CD4-positive, alpha-beta memory T cell (primary cell): ENCODE measurements at regions of chr22 and their contacts with region 1.

Region 1: DNA sequence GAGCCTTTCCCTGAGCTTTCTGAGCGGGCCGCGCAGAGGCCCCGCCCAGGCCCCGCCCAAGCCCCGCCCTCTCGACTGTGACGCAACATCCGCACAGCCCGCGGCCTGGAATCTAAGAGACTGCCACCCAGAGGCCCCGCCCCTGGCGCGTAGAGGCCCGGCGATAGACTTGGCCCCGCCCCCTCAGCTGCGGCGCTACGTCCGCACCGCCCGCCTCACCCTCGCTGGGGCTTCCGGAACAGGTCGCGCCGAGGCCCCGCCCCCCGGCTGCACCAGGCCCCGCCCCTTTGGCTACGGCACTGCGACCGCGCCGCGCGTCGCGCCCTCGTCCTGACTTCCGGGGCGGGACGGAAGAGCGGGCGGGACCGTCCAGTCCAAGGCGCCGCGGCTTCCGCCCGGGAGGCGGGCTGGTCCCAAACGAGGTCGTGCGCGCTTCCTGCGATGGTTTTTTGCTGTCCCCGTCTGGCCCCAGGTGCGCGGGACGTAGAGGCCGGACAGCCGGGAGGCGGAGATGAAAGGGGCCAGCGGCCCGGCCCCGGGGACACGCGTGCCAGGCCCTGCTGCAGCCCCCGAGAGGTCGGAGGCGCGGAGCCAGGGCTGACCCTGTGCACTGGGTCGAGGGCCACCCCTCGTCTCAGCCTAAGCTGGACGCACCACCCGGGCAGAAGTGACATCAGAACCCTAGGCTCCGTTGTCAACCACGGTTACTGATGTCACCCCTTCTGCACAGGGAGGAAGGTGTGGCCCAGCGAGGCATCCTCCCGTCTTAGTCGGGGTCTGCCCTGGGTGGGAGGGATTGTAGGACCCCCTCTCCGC is 59.0 kb upstream of the WNT7B start:
- DNase-seq: peak; percentile 99 to 100 (median 100)
- H3K4me3 ChIP-seq: peak overlapping the region; percentile 76 to 97
- H3K4me3 Mint-ChIP-seq: peak overlapping the region; percentile 84 to 93 (median 88)
- H3K27ac ChIP-seq: peak overlapping the region; percentile 98
- H3K27ac Mint-ChIP-seq: peak overlapping the region; percentile 92 to 98 (median 97)
- H3K4me1 ChIP-seq: peaks cover 20% of the 10 kb centered on the region
- H3K4me1 Mint-ChIP-seq: peaks cover 8 to 26% (median 15%) of the 10 kb centered on the region in 4 donors
- H3K27me3 ChIP-seq: no peaks in the 10 kb centered on the region
- H3K27me3 Mint-ChIP-seq: no peaks in the 10 kb centered on the region

Region 2: GRCh38 chr22:45318168-45318557 is 717.8 kb before region 1 on chr22:
- CTCF ChIA-PET with region 1: no interaction called
- POLR2A ChIA-PET with region 1: no interaction called
- intact Hi-C with region 1: loop called (anchors 5 kb)
- DNase-seq: peak; percentile 93 to 97 (median 96)
- H3K4me3 ChIP-seq: peak overlapping the region in 1 of 2 donors; percentile 49
- H3K4me3 Mint-ChIP-seq: peak overlapping the region; percentile 81 to 89 (median 83)
- H3K27ac ChIP-seq: peak overlapping the region; percentile 94
- H3K27ac Mint-ChIP-seq: peak overlapping the region; percentile 96 to 100 (median 99)
- H3K4me1 ChIP-seq: peaks cover 75% of the 10 kb centered on the region
- H3K4me1 Mint-ChIP-seq: peaks cover 36 to 92% (median 73%) of the 10 kb centered on the region in 4 donors
- H3K27me3 ChIP-seq: no peaks in the 10 kb centered on the region
- H3K27me3 Mint-ChIP-seq: no peaks in the 10 kb centered on the region

Region 3: DNA sequence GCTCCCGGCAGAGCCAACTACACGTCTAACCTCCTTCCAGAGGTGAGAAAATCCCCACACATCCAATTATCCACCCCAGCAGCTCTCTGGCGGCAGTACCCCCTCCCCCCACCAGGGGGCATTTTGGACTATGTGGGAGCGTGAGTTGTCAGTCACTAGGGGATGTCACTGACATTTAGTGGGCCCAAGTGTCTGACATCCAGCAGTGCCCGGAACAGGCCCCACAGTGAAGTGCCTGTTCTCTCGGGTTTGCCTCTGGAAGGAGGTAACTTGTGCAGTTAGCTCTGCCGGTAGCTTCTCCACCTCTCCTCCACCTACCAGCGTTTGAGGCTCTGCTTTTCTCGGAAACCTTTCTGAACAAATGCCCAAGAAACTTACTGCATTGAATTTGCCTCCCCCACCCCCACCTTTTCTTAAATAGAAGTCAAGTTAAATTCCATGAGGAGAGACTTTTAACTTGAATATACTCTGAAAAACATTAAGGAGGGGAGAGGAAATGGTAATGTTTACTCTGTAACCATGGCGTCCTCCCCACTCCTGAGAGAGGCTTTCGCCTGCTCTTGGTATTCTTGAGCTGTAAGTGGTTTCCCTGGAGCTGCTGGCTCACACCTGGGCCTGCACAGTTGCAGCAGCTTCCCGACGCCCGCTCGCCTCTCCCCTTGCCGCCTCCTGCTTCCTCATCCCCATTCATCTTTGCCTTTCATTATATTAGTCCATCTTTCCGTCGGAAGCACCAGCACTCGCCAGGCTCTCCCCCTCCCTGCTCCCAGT is 171.8 kb before region 1 on chr22:
- CTCF ChIA-PET with region 1: no interaction called
- POLR2A ChIA-PET with region 1: no interaction called
- intact Hi-C with region 1: no loop called
- DNase-seq: peak; percentile 49 to 53 (median 50)
- H3K4me3 ChIP-seq: no peak overlapping the region
- H3K4me3 Mint-ChIP-seq: no peak overlapping the region
- H3K27ac ChIP-seq: no peak overlapping the region
- H3K27ac Mint-ChIP-seq: peak overlapping the region in 4 of 7 donors; percentile 5 to 77 (median 30)
- H3K4me1 ChIP-seq: peaks cover 9% of the 10 kb centered on the region
- H3K4me1 Mint-ChIP-seq: peaks cover 2 to 22% (median 8%) of the 10 kb centered on the region in 4 donors
- H3K27me3 ChIP-seq: peaks cover 8% of the 10 kb centered on the region
- H3K27me3 Mint-ChIP-seq: peaks cover 23 to 24% of the 10 kb centered on the region in 2 donors

Region 4: DNA sequence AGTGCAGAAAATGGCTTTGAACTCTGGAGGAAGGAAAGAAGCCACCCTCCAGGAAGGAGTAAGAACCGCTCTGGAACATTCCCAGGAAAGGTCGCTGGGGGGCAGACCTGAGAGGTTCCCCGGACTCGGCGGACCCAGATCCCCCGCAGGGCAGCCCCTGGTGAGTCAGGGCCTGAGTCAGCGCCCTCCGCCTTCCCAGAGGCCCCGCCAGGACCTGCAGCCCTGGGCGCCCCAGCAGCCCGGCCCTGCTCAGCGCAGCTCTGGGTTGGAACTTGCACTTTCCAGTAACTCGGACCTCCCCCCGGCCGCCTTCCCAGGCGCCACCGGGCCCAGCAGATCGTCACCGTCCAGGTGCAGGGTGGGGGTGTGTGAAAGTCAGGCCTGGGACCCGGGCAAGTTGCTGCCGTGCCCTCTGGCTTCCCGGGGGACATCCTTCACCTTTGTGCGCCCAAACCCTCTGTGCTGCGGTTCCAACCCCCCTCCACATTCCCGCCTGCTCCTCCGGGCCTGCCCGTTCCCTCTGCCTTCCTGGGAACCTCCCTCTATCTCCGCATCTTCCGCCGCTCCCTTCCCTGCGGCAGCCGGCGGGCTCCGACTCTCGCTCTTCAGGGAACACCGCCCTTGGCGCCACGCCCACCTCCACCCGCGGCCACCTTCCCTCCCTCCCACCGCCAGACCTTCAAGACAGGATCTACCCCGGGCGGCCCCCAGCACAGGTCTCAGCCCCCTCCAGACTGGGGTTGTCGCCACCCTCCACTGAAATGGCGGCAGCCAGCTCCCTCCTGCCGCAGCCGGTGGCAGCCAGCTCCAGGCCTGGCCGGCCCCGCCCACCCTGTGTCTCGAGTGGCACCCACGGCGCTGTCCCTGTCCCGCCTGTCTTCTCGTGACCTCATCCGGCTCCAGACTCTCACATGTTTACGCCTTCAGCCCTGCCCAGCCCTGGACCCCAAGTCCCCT is 22.2 kb before region 1 on chr22:
- CTCF ChIA-PET with region 1: interaction called, 68 read pairs
- POLR2A ChIA-PET with region 1: interaction called, 73 read pairs
- intact Hi-C with region 1: loop called (anchors 1 kb)
- DNase-seq: peak; percentile 68 to 86 (median 71)
- H3K4me3 ChIP-seq: peak overlapping the region; percentile 61 to 71
- H3K4me3 Mint-ChIP-seq: peak overlapping the region; percentile 87 to 93 (median 91)
- H3K27ac ChIP-seq: peak overlapping the region; percentile 69
- H3K27ac Mint-ChIP-seq: peak overlapping the region; percentile 80 to 94 (median 92)
- H3K4me1 ChIP-seq: peaks cover 9% of the 10 kb centered on the region
- H3K4me1 Mint-ChIP-seq: peaks cover 5 to 17% (median 9%) of the 10 kb centered on the region in 4 donors
- H3K27me3 ChIP-seq: no peaks in the 10 kb centered on the region
- H3K27me3 Mint-ChIP-seq: no peaks in the 10 kb centered on the region

Region 5: GRCh38 chr22:46071451-46072109 is 35.6 kb after region 1 on chr22:
- CTCF ChIA-PET with region 1: interaction called, 11 read pairs
- POLR2A ChIA-PET with region 1: interaction called, 28 read pairs
- intact Hi-C with region 1: loop called (anchors 1 kb)
- DNase-seq: peak; percentile 44 to 75 (median 50)
- H3K4me3 ChIP-seq: peak overlapping the region in 1 of 2 donors; percentile 66
- H3K4me3 Mint-ChIP-seq: peak overlapping the region; percentile 76 to 90 (median 82)
- H3K27ac ChIP-seq: peak overlapping the region; percentile 31
- H3K27ac Mint-ChIP-seq: peak overlapping the region in 4 of 7 donors; percentile 70 to 80 (median 75)
- H3K4me1 ChIP-seq: peaks cover 56% of the 10 kb centered on the region
- H3K4me1 Mint-ChIP-seq: peaks cover 10 to 58% (median 46%) of the 10 kb centered on the region in 4 donors
- H3K27me3 ChIP-seq: no peaks in the 10 kb centered on the region
- H3K27me3 Mint-ChIP-seq: no peaks in the 10 kb centered on the region

Region 6: DNA sequence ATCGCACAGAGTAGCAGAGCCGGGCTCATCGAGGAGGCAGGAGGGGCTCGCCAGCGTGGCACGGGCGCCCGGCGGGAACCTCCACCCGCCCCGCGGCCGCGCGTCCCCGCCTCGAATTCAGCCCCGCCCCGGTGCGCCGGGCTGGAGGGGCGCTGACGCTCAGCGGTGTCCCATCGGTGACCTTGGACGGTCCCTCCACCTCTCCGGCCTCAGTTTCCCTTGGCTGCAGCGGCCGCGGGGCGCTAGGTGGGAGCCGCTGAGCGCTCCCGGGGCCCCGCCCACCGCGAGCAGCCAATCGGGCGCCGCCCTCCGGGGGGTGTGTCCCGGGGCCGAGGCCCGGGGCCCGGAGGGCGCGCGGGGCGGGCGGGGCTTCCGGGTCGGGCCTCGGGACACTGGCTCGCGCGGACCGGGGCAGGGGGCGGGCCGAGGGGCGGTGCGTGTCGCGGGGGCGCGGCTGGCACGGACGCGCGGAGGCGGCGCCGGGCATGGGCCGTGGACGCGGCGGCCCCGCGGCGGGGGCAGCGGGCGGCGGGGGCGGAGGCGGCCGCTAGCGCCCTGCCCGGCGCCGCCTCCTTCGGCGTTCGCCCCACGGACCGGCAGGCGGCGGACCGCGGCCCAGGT is 114.2 kb after region 1 on chr22 and contains the start of gene PPARA:
- CTCF ChIA-PET with region 1: no interaction called
- POLR2A ChIA-PET with region 1: interaction called, 10 read pairs
- intact Hi-C with region 1: loop called (anchors 5 kb)
- DNase-seq: peak; percentile 76 to 86 (median 80)
- H3K4me3 ChIP-seq: peak within 1 kb of the TSS; percentile 57 to 74
- H3K4me3 Mint-ChIP-seq: peak within 1 kb of the TSS; percentile 77 to 89 (median 83)
- H3K27ac ChIP-seq: peak within 1 kb of the TSS; percentile 61
- H3K27ac Mint-ChIP-seq: peak within 1 kb of the TSS; percentile 76 to 90 (median 85)
- H3K4me1 ChIP-seq: peaks cover 15% of the 10 kb centered on the region
- H3K4me1 Mint-ChIP-seq: peaks cover 12 to 26% (median 16%) of the 10 kb centered on the region in 4 donors
- H3K27me3 ChIP-seq: no peaks in the 10 kb centered on the region
- H3K27me3 Mint-ChIP-seq: no peaks in the 10 kb centered on the region
- total RNA-seq, gene PPARA: 21.3 to 23.2 TPM

Region 7: DNA sequence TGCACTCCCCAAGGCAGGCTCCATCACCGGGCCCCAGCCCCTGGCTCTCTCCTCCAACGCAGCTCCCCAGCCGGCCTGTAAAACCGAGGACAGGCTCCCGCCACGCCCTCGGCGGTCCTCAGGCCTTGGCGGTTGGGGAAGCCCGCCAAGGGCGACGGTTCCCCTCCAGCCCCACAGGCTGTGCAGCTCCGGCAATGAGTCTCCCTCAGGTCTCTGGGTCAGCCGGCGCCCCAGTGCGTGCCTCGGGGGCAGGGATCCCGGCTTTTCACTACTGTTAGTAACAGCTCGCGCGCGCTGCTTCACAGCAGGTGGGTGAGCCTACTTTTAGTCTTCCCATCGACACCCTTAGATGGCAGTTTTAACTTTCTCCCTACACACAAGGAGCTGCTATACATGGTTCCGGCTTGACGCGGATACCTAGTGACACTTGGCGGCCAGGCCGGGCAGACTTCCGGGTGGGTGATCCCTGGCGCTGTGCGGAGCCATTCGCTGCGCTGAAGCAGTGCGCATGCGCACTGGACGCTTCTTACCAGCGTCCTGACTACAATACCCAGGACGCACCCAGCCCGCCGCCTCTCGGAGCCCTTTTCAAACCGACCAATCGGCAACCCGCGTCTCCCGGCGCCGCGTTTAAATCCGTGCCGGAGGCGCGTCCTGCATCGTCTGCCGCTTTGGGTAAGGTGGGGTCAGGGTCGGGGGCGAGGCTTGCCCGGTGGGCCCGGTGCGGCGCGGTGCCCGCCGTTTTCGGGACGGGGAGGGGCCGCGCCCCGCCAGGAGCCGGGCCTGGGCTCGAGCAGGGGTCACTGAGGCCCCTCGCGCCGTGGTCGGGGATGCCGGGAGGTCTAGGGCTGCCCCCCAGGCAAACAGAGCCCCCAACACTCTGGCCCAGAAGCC is 260.6 kb after region 1 on chr22 and contains the start of gene GTSE1:
- CTCF ChIA-PET with region 1: no interaction called
- POLR2A ChIA-PET with region 1: interaction called, 18 read pairs
- intact Hi-C with region 1: no loop called
- DNase-seq: peak; percentile 94 to 97 (median 97)
- H3K4me3 ChIP-seq: peak within 1 kb of the TSS; percentile 48 to 63
- H3K4me3 Mint-ChIP-seq: peak within 1 kb of the TSS; percentile 79 to 97 (median 91)
- H3K27ac ChIP-seq: peak within 1 kb of the TSS; percentile 81
- H3K27ac Mint-ChIP-seq: peak within 1 kb of the TSS; percentile 93 to 99 (median 98)
- H3K4me1 ChIP-seq: peaks cover 19% of the 10 kb centered on the region
- H3K4me1 Mint-ChIP-seq: peaks cover 14 to 26% (median 19%) of the 10 kb centered on the region in 4 donors
- H3K27me3 ChIP-seq: no peaks in the 10 kb centered on the region
- H3K27me3 Mint-ChIP-seq: no peaks in the 10 kb centered on the region
- total RNA-seq, gene GTSE1: 0.64 TPM in 1 of 2 experiments, not detected in the other